PC-3 (cell line): ENCODE measurements at regions of chr11 and their contacts with region 1.

Region 1: DNA sequence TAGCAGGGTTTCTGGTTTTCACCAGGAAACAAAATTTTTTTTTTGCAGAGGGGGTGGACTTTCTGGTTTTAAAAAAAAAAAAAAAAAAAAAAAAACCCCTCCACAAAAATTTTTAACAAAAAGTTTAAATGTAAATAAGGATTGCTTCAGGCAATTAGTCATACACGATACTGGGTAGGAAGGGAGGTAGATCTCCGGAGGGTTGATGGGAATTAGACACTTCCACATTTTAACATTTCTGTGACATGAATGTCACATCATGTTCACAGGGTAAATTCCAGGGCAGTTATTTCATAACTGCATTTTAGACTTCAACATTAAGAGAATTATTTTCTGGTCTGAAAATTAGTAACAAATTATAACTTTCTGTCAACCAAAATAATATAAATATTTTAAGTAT is 15.9 kb downstream of the NUP98 start:
- DNase-seq: peak; percentile 50
- ATAC-seq: peak; percentile 81
- H3K4me3 ChIP-seq: no peak overlapping the region
- H3K27ac ChIP-seq: no peak overlapping the region
- H3K4me1 ChIP-seq: peaks cover 13% of the 10 kb centered on the region
- H3K27me3 ChIP-seq: no peaks in the 10 kb centered on the region
- CTCF ChIP-seq: no peak

Region 2: DNA sequence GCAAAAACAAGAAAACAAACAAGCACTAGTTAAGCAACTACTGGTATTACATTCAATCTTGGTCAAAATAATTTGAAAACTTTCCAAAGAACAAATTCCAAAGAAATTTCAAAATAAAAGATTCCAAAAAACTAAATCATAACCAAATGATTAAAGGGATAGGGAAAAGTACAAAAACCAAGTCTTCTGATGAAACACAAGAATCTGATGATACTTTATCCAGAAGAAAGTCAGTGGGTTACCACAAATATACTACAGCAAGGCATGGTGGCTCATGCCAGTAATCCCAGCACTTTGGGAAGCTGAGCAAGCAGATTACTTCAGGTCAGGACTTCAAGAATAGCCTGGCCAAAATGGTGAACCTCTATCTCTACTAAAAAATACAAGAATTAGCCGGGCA is 43.2 kb before region 1 on chr11:
- CTCF ChIA-PET with region 1: no interaction called
- POLR2A ChIA-PET with region 1: interaction called, 10 read pairs
- intact Hi-C with region 1: no loop called
- DNase-seq: no peak
- ATAC-seq: no peak
- H3K4me3 ChIP-seq: no peak overlapping the region
- H3K27ac ChIP-seq: no peak overlapping the region
- H3K4me1 ChIP-seq: no peaks in the 10 kb centered on the region
- H3K27me3 ChIP-seq: no peaks in the 10 kb centered on the region
- CTCF ChIP-seq: no peak